ENCODE measurements at regions of chr12 and their contacts with region 1.

Region 1: DNA sequence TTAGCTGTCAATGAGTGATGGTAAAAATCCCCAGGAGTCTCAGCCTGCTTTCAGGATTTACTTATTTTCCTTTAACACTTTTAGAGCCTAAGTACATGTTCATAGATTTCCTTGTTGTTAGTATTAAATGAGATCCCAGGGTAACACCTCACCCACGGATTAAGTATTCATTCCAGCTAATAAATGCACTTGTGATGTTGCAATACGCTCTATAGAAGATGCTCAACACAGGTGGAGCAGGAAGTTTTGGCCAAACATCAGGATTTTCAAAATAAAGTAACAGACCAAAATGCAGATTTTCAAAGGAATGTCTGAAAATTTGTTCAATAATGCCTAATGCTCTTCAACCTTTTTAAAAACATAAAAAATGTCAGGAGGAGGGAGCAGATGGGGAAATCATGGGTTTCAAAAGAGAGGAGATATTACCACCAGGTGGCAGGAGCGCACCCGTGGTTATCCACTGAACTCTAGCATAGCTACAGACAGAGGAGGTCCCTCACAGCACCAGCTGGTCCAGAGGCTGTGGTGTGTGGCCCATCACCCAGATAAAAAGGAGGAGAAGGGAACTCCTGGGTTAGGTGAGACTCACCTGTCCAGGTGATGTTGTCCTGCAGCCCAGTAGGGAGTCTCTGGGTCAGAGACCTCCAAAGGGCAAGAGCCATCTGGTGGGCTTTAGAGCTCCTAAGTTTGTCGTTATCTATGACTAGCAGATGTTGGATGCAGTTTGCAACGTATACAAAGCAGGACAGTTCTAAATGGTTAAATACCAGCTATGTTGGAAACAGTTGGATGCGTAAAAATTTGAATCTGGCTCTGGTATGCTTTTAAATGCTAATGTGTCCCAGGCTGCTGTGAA is 1158.4 kb upstream of the TMEM132C start:
- DNase-seq: peak; percentile 42 to 79 (median 68)
- H3K4me3 ChIP-seq: no peak overlapping the region
- H3K27ac ChIP-seq: no peak overlapping the region
- H3K4me1 ChIP-seq: no peaks in the 10 kb centered on the region
- H3K27me3 ChIP-seq: no peaks in the 10 kb centered on the region
- CTCF ChIP-seq: peak; percentile 48 to 72 (median 64)
- POLR2A ChIP-seq: no peak

Region 2: DNA sequence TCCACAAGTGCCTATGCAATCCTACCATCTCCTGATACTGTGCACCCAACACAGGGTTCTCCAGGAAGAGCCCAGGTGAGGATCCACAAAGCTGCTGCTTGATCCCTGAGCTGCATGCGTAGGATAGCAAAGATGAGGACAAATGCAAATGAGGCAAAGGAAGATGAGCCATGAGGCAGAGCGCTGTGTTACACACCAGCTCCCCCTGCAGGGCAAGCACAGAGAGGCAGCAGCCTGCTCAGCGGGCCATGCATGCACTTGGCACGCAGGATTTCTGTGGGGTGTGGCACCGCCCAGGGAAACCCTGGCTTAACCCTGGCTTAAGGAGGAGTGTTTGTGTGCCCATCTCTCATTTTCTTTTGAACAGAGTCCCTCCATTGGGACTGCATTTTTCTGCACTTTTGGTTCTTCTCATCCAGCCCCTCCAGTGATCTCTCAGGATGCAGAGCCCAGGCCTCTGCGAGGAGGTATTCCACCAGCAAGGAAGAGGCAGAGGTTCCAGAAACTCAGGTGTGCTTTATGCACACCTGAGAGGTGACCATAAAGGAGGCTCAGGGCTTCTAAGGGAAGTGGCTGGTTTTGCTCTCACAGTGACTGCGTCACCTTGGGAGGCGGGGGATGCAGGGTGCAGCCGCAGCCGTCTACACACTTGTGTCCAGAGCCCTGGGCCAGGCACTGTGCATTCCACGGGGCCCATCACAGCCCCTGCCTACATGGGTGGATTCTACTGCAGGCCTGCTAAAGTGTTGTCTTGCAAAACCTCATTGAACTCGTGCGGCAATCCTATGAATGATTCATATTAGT is 185.1 kb after region 1 on chr12:
- intact Hi-C with region 1: loop called (anchors 5 to 10 kb)
- DNase-seq: peak; percentile 32 to 73 (median 64)
- H3K4me3 ChIP-seq: no peak overlapping the region
- H3K27ac ChIP-seq: no peak overlapping the region
- H3K4me1 ChIP-seq: no peaks in the 10 kb centered on the region
- H3K27me3 ChIP-seq: no peaks in the 10 kb centered on the region
- CTCF ChIP-seq: peak; percentile 55 to 69 (median 60)
- POLR2A ChIP-seq: no peak

Region 3: GRCh38 chr12:127381048-127381668 is 272.6 kb after region 1 on chr12:
- intact Hi-C with region 1: loop called in 1 of 2 experiments (anchors 5 kb)
- DNase-seq: peak in 5 of 7 donors; percentile 14 to 42 (median 25)
- H3K4me3 ChIP-seq: peak overlapping the region in 1 of 4 donors; percentile 33
- H3K27ac ChIP-seq: no peak overlapping the region
- H3K4me1 ChIP-seq: no peaks in the 10 kb centered on the region
- H3K27me3 ChIP-seq: no peaks in the 10 kb centered on the region
- CTCF ChIP-seq: peak; percentile 49 to 86 (median 62)
- POLR2A ChIP-seq: no peak